Dorsolateral prefrontal cortex (tissue), 120 donors: ENCODE measurements at regions of chr15 and their contacts with region 1.

Region 1: GRCh38 chr15:44188795-44189194 is 6.3 kb downstream of the FRMD5 start:
- DNase-seq: peak in 7 of 10 donors; percentile 46 to 87 (median 64)
- H3K4me3 ChIP-seq: peak overlapping the region in 17 of 59 donors; percentile 3 to 81 (median 16)
- H3K27ac ChIP-seq: peak overlapping the region; percentile 69 to 100 (median 95)
- H3K27me3 ChIP-seq: no peaks in the 10 kb centered on the region
- CTCF ChIP-seq: no peak

Region 2: GRCh38 chr15:43550527-43551363 is 638.0 kb before region 1 on chr15:
- intact Hi-C with region 1: no loop called
- DNase-seq: no peak
- H3K4me3 ChIP-seq: no peak overlapping the region
- H3K27ac ChIP-seq: no peak overlapping the region
- H3K27me3 ChIP-seq: no peaks in the 10 kb centered on the region
- CTCF ChIP-seq: no peak

Region 3: DNA sequence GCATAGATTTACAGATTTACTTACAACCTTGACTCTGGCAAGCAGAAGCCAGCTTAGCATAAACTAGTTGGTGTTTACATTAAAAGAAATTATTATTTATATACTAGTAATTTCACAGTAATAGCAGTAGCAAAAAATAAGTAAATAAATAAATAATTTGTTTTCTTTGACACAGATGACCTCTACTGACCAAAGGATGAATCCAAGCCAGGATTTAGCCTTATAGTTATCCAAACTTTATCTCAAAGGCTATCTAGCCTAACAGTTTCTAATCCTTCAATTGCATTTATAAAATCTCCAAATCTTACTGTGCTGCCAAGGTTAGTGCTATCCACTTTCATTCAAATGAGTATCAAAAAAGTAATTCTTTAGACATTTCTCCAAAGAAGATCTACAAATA is 58.0 kb before region 1 on chr15:
- intact Hi-C with region 1: loop called in 1 of 2 experiments (anchors 5 kb)
- DNase-seq: no peak
- H3K4me3 ChIP-seq: no peak overlapping the region
- H3K27ac ChIP-seq: peak overlapping the region in 24 of 59 donors; percentile 2 to 77 (median 47)
- H3K27me3 ChIP-seq: no peaks in the 10 kb centered on the region
- CTCF ChIP-seq: peak in 52 of 56 donors; percentile 14 to 77 (median 50)

Region 4: GRCh38 chr15:44265757-44266156 is 77.0 kb after region 1 on chr15:
- intact Hi-C with region 1: no loop called
- DNase-seq: no peak
- H3K4me3 ChIP-seq: no peak overlapping the region
- H3K27ac ChIP-seq: no peak overlapping the region
- H3K27me3 ChIP-seq: no peaks in the 10 kb centered on the region
- CTCF ChIP-seq: no peak